Cardiac septum (tissue), 1 donor: ENCODE measurements at regions of chr20 and their contacts with region 1.

Region 1: GRCh38 chr20:7723284-7723683 is 217.0 kb downstream of the HAO1 start:
- DNase-seq: no peak

Region 2: DNA sequence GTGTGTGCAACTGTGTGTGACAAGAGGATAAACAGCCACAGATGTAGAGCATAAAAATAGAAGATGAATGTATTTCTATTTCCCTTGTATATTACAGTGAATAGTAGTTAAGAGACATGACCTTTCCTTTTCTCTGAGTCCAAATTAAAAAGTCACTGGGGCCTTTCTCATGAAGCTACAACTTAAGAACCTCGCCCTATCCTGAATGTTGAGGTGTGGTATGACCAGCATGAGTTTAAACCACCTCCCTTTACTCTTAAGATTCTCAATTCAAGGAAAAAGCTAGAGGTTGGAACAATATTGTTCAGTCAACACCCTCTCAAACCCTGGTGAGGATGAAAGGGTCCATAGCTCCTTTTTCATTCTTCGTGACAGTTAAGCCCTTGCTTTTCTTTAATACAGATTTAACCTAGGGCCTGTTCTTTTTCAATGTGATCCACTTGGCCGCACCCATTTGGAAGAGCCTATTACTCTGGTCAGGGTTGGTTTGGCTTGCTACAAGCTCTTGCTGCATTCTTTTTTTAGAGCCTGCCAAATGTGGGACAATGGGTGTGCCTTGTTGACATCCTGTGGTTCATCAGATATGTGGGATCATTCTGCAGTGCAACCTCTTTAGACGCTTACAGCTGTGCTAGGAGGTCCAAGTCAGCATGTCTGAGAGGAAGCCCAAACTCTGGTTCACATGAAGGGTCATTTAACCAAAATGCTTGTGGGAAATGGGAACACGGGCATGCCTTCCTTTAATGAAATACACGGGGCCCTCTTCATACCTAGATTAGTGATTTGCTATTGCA is 73.0 kb before region 1 on chr20:
- intact Hi-C with region 1: loop called (anchors 5 kb)
- DNase-seq: no peak

Region 3: GRCh38 chr20:7879883-7880282 is 156.6 kb after region 1 on chr20:
- intact Hi-C with region 1: no loop called
- DNase-seq: no peak